ENCODE measurements at regions of chr6 and their contacts with region 1.

Region 1: DNA sequence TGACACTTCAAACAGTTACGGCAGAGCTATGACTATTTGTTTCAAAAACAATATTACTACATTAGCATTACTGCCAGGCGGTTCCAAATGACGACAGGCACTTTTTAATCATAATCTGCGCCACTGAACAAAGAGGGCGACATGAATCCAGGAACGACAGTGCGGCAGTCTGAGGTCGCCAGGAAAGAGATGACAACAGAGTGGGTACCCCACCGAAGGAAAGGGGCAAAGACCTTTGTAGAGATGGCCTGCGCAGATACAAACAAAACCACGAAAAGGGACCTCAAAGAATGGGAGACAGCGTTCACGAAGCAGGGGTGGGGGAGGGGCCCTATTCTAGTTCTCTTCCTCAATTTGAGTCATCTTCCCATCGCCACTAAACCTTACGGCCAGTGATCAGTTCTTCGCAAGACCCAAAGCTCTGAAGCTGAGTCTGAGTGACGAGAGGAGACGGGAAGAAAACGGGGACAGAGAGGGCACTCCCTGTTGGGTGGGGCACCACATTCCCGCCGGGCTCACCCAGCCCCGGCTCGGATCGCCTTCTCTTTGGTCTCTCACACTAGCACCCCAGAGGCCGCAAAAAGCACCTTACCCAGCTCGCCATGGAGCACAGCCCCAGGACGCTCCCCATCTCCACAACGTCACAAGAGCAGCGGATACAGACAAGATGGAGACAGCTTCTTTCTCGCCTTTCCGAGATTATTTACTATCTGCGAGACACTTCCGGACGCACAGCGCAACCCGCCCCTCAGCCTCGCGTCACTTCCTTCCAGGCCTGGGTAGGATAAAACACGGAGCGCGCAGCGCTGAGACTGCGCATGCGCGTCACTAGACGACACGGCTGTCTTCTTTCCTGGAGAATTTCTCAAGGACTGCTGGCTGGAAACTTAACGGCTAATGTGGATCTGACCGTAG is at the start of gene SERINC1:
- DNase-seq: peak; percentile 95
- H3K4me3 ChIP-seq: peak within 1 kb of the TSS; percentile 67 to 87 (median 77)
- H3K27ac ChIP-seq: peak within 1 kb of the TSS; percentile 88 to 95 (median 92)
- H3K4me1 ChIP-seq: peaks cover 0 to 48% (median 18%) of the 10 kb centered on the region in 4 donors
- H3K27me3 ChIP-seq: no peaks in the 10 kb centered on the region
- CTCF ChIP-seq: no peak
- EP300 ChIP-seq: peak; percentile 19
- POLR2A ChIP-seq: peak; percentile 95
- total RNA-seq, gene SERINC1: 32.6 to 138 (median 87.0) TPM

Region 2: GRCh38 chr6:122399384-122400158 is 71.8 kb before region 1 on chr6 and contains the start of gene HSF2:
- in situ Hi-C with region 1: loop called in 1 of 4 experiments (anchors 10 kb)
- intact Hi-C with region 1: no loop called
- DNase-seq: peak; percentile 96
- H3K4me3 ChIP-seq: peak within 1 kb of the TSS; percentile 95 to 99 (median 96)
- H3K27ac ChIP-seq: peak within 1 kb of the TSS; percentile 89 to 96 (median 92)
- H3K4me1 ChIP-seq: peaks cover 0 to 21% (median 16%) of the 10 kb centered on the region in 4 donors
- H3K27me3 ChIP-seq: no peaks in the 10 kb centered on the region
- CTCF ChIP-seq: peak in 2 of 5 experiments; percentile 25 to 26
- EP300 ChIP-seq: no peak
- POLR2A ChIP-seq: peak; percentile 51
- total RNA-seq, gene HSF2: 6.0 to 20.5 (median 9.9) TPM

Region 3: GRCh38 chr6:122405417-122405816 is 65.9 kb before region 1 on chr6:
- in situ Hi-C with region 1: no loop called
- intact Hi-C with region 1: loop called (anchors 5 kb)
- DNase-seq: no peak
- H3K4me3 ChIP-seq: no peak overlapping the region
- H3K27ac ChIP-seq: no peak overlapping the region
- H3K4me1 ChIP-seq: peaks cover 0 to 13% (median 10%) of the 10 kb centered on the region in 4 donors
- H3K27me3 ChIP-seq: no peaks in the 10 kb centered on the region
- CTCF ChIP-seq: no peak
- EP300 ChIP-seq: no peak
- POLR2A ChIP-seq: no peak